ENCODE measurements at regions of chr1 and their contacts with region 1.

Region 1: DNA sequence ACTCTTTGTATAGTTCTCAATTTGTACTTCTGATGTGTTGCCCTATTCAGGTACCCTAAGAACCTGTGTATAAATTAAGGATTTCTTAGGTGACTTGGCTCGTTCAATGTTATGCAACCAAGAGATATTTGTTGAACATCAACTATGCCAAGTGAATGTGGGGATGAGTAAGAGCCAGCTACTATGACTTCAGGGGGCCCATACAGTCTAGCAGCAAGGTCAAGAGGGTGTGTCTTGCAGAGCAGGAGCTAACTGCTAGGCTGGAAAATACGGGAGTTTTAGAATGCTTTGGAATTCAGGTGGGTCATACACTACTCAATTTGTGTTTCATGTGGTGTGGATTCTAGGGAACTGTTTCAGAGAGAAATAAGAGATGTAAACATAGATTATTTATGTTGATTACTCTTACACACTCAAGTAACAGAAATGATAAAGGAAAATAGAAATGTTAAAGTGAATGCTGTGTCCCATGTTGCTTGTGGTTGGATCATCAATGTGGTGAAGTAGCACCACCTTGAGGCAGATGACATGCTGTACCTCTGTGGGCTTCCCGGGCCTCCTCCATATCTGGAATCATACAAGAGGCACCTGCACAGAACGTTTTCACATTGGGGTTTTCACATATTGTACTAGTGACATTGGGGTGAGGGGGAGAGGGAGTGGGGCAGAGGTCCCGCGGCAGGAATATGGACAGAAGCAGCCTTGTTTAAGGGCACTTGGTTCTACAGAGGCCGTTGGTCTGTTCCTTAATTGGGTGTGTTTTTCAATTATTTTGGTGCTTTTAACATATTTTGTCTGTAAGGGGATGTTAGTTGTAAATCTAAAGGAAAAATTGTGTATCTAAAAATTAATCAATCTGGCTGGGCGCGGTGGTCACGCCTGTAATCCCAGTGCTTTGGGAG is 12.4 kb downstream of the ARPC5 start:
- DNase-seq: peak; percentile 80
- ATAC-seq: peak; percentile 96
- H3K4me3 ChIP-seq: no peak overlapping the region
- H3K4me3 Mint-ChIP-seq: no peak overlapping the region
- H3K27ac ChIP-seq: peak overlapping the region in 1 of 2 donors; percentile 44
- H3K27ac Mint-ChIP-seq: peak overlapping the region; percentile 42
- H3K4me1 ChIP-seq: peaks cover 2 to 9% of the 10 kb centered on the region in 2 donors
- H3K4me1 Mint-ChIP-seq: peaks cover 20% of the 10 kb centered on the region
- H3K27me3 ChIP-seq: no peaks in the 10 kb centered on the region
- H3K27me3 Mint-ChIP-seq: no peaks in the 10 kb centered on the region
- CTCF ChIP-seq: peak; percentile 80

Region 2: DNA sequence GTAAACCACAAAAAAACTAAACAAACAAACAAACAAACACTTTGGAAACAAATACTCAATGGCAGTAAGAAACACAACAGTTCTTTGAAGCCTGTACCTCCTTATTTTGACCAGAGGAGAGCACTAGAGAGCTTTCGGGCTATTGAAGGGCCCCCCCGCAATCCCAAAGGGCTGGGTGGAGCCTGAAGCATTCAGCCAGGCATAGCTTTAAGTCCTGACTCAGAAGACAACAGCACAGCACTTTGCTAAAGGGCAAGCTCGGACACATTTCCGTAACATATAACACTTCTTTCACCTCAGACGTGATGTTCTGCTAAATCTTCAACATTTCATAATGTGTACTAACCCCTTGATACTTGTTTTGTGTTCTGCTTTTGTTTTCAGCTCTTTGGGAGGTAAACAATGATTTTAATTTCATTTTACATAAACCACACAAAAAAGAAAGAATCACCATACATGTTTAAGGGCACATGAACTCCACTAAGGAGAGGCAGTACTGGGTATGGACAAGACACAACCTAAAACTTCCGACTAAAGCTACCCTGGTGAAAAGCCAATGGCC is 660.5 kb before region 1 on chr1:
- CTCF ChIA-PET with region 1: interaction called, 4 read pairs
- POLR2A ChIA-PET with region 1: no interaction called
- intact Hi-C with region 1: loop called (anchors 5 kb)
- DNase-seq: peak; percentile 81
- ATAC-seq: peak; percentile 100
- H3K4me3 ChIP-seq: peak overlapping the region in 4 of 5 experiments; percentile 3 to 48 (median 25)
- H3K4me3 Mint-ChIP-seq: peak overlapping the region; percentile 54
- H3K27ac ChIP-seq: no peak overlapping the region
- H3K27ac Mint-ChIP-seq: peak overlapping the region; percentile 64
- H3K4me1 ChIP-seq: peaks cover 5 to 7% of the 10 kb centered on the region in 2 donors
- H3K4me1 Mint-ChIP-seq: peaks cover 8% of the 10 kb centered on the region
- H3K27me3 ChIP-seq: peaks cover 0 to 5% (median 0%) of the 10 kb centered on the region in 4 experiments
- H3K27me3 Mint-ChIP-seq: peaks cover 4% of the 10 kb centered on the region
- CTCF ChIP-seq: peak; percentile 89

Region 3: DNA sequence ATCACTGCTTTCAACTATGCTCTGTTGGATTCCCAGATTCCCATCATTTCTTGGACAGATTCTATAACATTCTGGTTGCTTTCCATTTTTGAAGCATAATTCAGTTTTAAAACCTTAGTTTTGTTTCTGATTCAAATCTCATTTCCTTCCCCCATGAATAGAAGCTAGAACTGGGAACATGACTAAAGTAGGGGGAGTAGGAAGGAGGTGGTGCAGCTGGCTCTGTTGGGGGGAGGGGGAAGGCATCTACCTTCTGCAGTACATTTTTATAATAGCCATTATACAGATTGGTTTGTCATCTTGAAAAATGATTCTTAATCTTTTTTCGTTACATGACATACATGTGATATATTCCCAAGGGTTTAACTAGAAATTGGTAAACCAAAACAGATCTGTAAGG is 102.8 kb before region 1 on chr1:
- CTCF ChIA-PET with region 1: no interaction called
- POLR2A ChIA-PET with region 1: no interaction called
- intact Hi-C with region 1: loop called (anchors 5 kb)
- DNase-seq: no peak
- ATAC-seq: no peak
- H3K4me3 ChIP-seq: no peak overlapping the region
- H3K4me3 Mint-ChIP-seq: no peak overlapping the region
- H3K27ac ChIP-seq: no peak overlapping the region
- H3K27ac Mint-ChIP-seq: no peak overlapping the region
- H3K4me1 ChIP-seq: no peaks in the 10 kb centered on the region
- H3K4me1 Mint-ChIP-seq: no peaks in the 10 kb centered on the region
- H3K27me3 ChIP-seq: no peaks in the 10 kb centered on the region
- H3K27me3 Mint-ChIP-seq: no peaks in the 10 kb centered on the region
- CTCF ChIP-seq: no peak

Region 4: GRCh38 chr1:183554577-183554976 is 68.6 kb before region 1 on chr1:
- CTCF ChIA-PET with region 1: interaction called, 11 read pairs
- POLR2A ChIA-PET with region 1: no interaction called
- intact Hi-C with region 1: no loop called
- DNase-seq: peak; percentile 44
- ATAC-seq: peak; percentile 86
- H3K4me3 ChIP-seq: no peak overlapping the region
- H3K4me3 Mint-ChIP-seq: no peak overlapping the region
- H3K27ac ChIP-seq: peak overlapping the region in 1 of 2 donors; percentile 44
- H3K27ac Mint-ChIP-seq: peak overlapping the region; percentile 42
- H3K4me1 ChIP-seq: peaks cover 9 to 12% of the 10 kb centered on the region in 2 donors
- H3K4me1 Mint-ChIP-seq: peaks cover 20% of the 10 kb centered on the region
- H3K27me3 ChIP-seq: no peaks in the 10 kb centered on the region
- H3K27me3 Mint-ChIP-seq: no peaks in the 10 kb centered on the region
- CTCF ChIP-seq: no peak

Region 5: GRCh38 chr1:183635606-183636333 is 12.6 kb after region 1 on chr1 and contains the start of gene ARPC5:
- CTCF ChIA-PET with region 1: interaction called, 8 read pairs
- POLR2A ChIA-PET with region 1: interaction called, 4 read pairs
- intact Hi-C with region 1: loop called (anchors 1 kb)
- DNase-seq: peak; percentile 98
- ATAC-seq: peak; percentile 88
- H3K4me3 ChIP-seq: peak within 1 kb of the TSS; percentile 83 to 95 (median 87)
- H3K4me3 Mint-ChIP-seq: peak within 1 kb of the TSS; percentile 100
- H3K27ac ChIP-seq: peak within 1 kb of the TSS; percentile 59 to 80
- H3K27ac Mint-ChIP-seq: peak within 1 kb of the TSS; percentile 99
- H3K4me1 ChIP-seq: peaks cover 20 to 34% of the 10 kb centered on the region in 2 donors
- H3K4me1 Mint-ChIP-seq: peaks cover 42% of the 10 kb centered on the region
- H3K27me3 ChIP-seq: no peaks in the 10 kb centered on the region
- H3K27me3 Mint-ChIP-seq: no peaks in the 10 kb centered on the region
- CTCF ChIP-seq: no peak
- total RNA-seq, gene ARPC5: 91.9 and 103 TPM in 2 replicates

Region 6: DNA sequence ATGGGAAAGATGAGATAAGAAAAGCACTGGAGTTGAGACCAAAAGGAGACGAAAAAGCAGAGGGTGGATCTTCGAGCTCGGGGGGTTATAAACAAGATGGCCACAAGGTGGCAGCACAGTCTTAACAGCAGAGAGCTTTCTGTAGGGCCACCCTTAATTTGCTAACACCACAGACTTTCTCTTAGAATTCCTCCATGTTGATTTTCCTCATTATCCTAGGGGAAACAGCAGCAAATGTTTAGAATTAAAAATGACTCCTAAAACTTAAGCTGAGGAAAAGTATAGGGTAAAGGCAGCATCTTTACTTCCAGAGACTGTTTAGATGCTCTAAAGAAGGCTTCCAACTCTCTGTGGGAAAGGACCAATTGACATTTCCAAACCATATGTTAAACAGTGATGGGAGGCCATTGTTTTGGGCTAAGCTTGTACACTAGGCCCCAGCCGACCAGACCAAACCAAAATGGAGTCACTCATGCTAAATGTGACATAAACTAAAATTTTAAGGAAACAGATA is 32.5 kb after region 1 on chr1:
- CTCF ChIA-PET with region 1: no interaction called
- POLR2A ChIA-PET with region 1: no interaction called
- intact Hi-C with region 1: no loop called
- DNase-seq: peak; percentile 80
- ATAC-seq: peak; percentile 84
- H3K4me3 ChIP-seq: no peak overlapping the region
- H3K4me3 Mint-ChIP-seq: no peak overlapping the region
- H3K27ac ChIP-seq: no peak overlapping the region
- H3K27ac Mint-ChIP-seq: no peak overlapping the region
- H3K4me1 ChIP-seq: no peaks in the 10 kb centered on the region
- H3K4me1 Mint-ChIP-seq: no peaks in the 10 kb centered on the region
- H3K27me3 ChIP-seq: no peaks in the 10 kb centered on the region
- H3K27me3 Mint-ChIP-seq: peaks cover 5% of the 10 kb centered on the region
- CTCF ChIP-seq: peak; percentile 94